ENCODE measurements at regions of chr3 and their contacts with region 1.

Region 1: DNA sequence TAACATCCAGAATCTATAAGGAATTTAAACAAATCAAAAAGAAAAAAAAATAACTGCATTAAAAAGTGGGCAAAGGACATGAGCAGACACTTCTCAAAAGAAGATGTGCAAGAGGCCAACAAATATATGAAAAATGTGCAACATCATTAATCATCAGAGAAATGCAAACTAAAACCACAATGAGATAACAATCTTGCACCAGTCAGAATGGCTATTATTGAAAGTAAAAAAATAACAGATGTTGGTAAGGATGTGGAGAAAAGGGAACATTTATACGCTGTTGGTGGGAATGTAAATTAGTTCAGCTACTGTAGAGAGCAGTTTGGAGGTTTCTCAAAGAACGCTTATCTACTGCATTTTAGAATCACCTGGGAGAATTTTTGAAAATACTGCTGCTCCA is 186.1 kb downstream of the OTOL1 start:
- DNase-seq: no peak
- ATAC-seq: peak; percentile 77
- H3K4me3 ChIP-seq: no peak overlapping the region
- H3K27ac ChIP-seq: no peak overlapping the region
- H3K4me1 ChIP-seq: no peaks in the 10 kb centered on the region
- H3K27me3 ChIP-seq: no peaks in the 10 kb centered on the region
- CTCF ChIP-seq: no peak
- EP300 ChIP-seq: no peak
- POLR2A ChIP-seq: no peak
- RAD21 ChIP-seq: no peak

Region 2: GRCh38 chr3:161694682-161695564 is 12.2 kb after region 1 on chr3:
- CTCF ChIA-PET with region 1: interaction called, 6 read pairs
- POLR2A ChIA-PET with region 1: no interaction called
- RAD21 ChIA-PET with region 1: no interaction called
- SMC1A ChIA-PET with region 1: interaction called, 20 read pairs
- in situ Hi-C with region 1: no loop called
- intact Hi-C with region 1: no loop called
- DNase-seq: peak; percentile 5
- ATAC-seq: peak; percentile 92
- H3K4me3 ChIP-seq: no peak overlapping the region
- H3K27ac ChIP-seq: no peak overlapping the region
- H3K4me1 ChIP-seq: no peaks in the 10 kb centered on the region
- H3K27me3 ChIP-seq: no peaks in the 10 kb centered on the region
- CTCF ChIP-seq: no peak
- EP300 ChIP-seq: 0 out of 4 replicates have a peak, but pooled peaks of 1 of the 2 experiments have one; percentile 39
- POLR2A ChIP-seq: no peak
- RAD21 ChIP-seq: no peak

Measured in GM12878 (cell line).